Activated CD4-positive, alpha-beta T cell treated with anti-CD3 and anti-CD28 coated beads, Interleukin-2, amount 10 ng/mL, durations not matched to agents 24 days and 14 days (primary cell): ENCODE measurements at regions of chr17 and their contacts with region 1.

Region 1: DNA sequence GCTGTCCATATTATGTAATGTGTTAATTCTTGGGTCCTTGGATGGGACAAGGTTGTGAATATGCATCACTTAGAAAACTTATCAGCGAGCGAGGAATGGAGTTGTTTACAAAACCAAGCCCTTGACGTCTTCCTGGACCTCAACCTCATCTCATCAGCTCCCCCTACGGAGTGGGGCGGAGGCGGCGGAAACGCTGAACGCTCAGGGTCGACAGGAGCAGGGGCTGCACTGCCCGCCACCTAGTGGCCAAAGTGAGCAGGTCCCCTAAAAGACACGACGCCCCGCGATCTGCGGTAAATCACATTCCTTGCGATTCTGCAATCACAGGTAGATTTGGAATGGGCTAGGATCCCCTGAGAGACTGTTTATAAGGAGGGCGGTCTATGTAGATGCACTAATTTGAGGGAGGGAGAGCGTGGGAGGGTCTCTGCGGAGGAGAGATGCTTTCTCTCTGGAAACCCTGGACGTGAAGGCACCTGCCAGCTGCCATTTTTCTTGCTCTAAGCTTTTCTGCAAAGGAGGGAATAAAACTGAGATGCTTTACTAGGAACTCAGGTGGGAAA is 5.4 kb upstream of the ICAM2 start:
- DNase-seq: peak; percentile 97
- H3K4me3 Mint-ChIP-seq: peak overlapping the region; percentile 73
- H3K27ac Mint-ChIP-seq: peak overlapping the region; percentile 85
- H3K4me1 Mint-ChIP-seq: peaks cover 62% of the 10 kb centered on the region
- H3K27me3 Mint-ChIP-seq: no peaks in the 10 kb centered on the region

Region 2: GRCh38 chr17:63919311-63919723 is 106.5 kb before region 1 on chr17:
- intact Hi-C with region 1: loop called (anchors 1 kb)
- DNase-seq: peak; percentile 93
- H3K4me3 Mint-ChIP-seq: no peak overlapping the region
- H3K27ac Mint-ChIP-seq: peak overlapping the region; percentile 66
- H3K4me1 Mint-ChIP-seq: peaks cover 9% of the 10 kb centered on the region
- H3K27me3 Mint-ChIP-seq: peaks cover 10% of the 10 kb centered on the region

Region 3: DNA sequence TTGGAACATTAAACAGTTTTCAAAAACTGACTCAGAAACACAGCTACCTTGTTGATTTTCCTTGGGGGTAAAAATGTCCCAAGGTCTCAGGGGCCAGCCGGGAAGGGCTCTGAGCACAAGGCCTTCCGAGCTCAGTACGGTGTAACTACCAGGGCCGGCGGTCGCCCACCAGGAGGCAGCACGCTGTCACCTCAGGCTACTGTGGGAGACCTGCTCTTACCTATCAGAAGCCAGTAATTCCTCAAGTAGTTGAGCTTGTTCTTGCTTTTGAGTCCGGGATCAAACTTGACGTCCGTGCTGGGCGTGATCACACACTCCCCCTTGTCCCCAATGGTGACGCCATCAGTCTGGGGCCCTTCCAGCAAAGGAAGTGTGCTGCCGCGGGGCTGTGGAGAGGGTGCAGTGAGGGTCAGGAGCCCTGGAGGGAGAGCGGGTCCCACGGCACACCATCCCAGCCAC is 38.0 kb after region 1 on chr17:
- intact Hi-C with region 1: loop called (anchors 5 kb)
- DNase-seq: peak; percentile 84
- H3K4me3 Mint-ChIP-seq: no peak overlapping the region
- H3K27ac Mint-ChIP-seq: peak overlapping the region; percentile 37
- H3K4me1 Mint-ChIP-seq: peaks cover 72% of the 10 kb centered on the region
- H3K27me3 Mint-ChIP-seq: no peaks in the 10 kb centered on the region

Region 4: GRCh38 chr17:64081802-64082799 is 56.3 kb after region 1 on chr17:
- intact Hi-C with region 1: loop called (anchors 5 kb)
- DNase-seq: peak; percentile 88
- H3K4me3 Mint-ChIP-seq: peak overlapping the region; percentile 62
- H3K27ac Mint-ChIP-seq: peak overlapping the region; percentile 82
- H3K4me1 Mint-ChIP-seq: peaks cover 41% of the 10 kb centered on the region
- H3K27me3 Mint-ChIP-seq: no peaks in the 10 kb centered on the region